Endothelial cell of umbilical vein (primary cell): ENCODE measurements at regions of chr6 and their contacts with region 1.

Region 1: DNA sequence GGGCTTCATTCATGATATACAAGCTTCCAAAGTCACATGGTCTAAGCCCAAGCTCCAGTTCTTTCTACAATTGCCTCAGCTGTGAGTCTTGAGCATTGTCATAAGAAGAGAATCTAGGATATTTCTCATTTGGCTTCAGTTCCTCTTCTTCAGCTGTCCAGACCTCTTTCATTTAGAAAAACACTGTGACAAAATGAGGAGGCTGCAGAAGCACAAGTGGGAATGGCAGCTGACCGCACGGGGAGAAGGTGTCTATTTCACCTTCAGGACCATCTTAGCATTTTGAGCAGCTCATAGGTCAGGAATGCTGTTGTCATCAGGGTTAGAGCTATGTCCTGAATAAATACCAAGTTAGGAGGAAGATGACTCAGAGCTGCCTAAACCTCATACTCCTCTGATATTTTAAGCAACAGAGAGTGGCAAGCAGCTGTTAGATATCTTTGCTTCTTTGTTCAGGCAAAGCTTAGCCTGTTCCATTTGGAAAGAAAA is 390.1 kb upstream of the CITED2 start:
- DNase-seq: peak; percentile 91
- H3K4me3 ChIP-seq: no peak overlapping the region
- H3K27ac ChIP-seq: peak overlapping the region; percentile 96
- H3K4me1 ChIP-seq: peaks cover 42% of the 10 kb centered on the region
- H3K27me3 ChIP-seq: no peaks in the 10 kb centered on the region
- CTCF ChIP-seq: no peak
- POLR2A ChIP-seq: peak; percentile 63

Region 2: GRCh38 chr6:139369568-139370282 is 394.8 kb before region 1 on chr6:
- CTCF ChIA-PET with region 1: interaction called, 20 read pairs
- POLR2A ChIA-PET with region 1: interaction called, 29 read pairs
- dilution Hi-C with region 1: no loop called
- intact Hi-C with region 1: loop called (anchors 1 kb)
- DNase-seq: peak; percentile 68
- H3K4me3 ChIP-seq: no peak overlapping the region
- H3K27ac ChIP-seq: no peak overlapping the region
- H3K4me1 ChIP-seq: peaks cover 41% of the 10 kb centered on the region
- H3K27me3 ChIP-seq: no peaks in the 10 kb centered on the region
- CTCF ChIP-seq: peak; percentile 43 to 46
- POLR2A ChIP-seq: no peak

Region 3: GRCh38 chr6:139568956-139569548 is 195.5 kb before region 1 on chr6:
- CTCF ChIA-PET with region 1: interaction called, 3 read pairs
- POLR2A ChIA-PET with region 1: no interaction called
- dilution Hi-C with region 1: no loop called
- intact Hi-C with region 1: loop called (anchors 1 kb)
- DNase-seq: peak; percentile 80
- H3K4me3 ChIP-seq: peak overlapping the region in 1 of 3 experiments; percentile 22
- H3K27ac ChIP-seq: peak overlapping the region; percentile 81
- H3K4me1 ChIP-seq: peaks cover 24% of the 10 kb centered on the region
- H3K27me3 ChIP-seq: no peaks in the 10 kb centered on the region
- CTCF ChIP-seq: no peak
- POLR2A ChIP-seq: no peak

Region 4: GRCh38 chr6:139644821-139645220 is 119.7 kb before region 1 on chr6:
- CTCF ChIA-PET with region 1: no interaction called
- POLR2A ChIA-PET with region 1: no interaction called
- dilution Hi-C with region 1: no loop called
- intact Hi-C with region 1: no loop called
- DNase-seq: no peak
- H3K4me3 ChIP-seq: no peak overlapping the region
- H3K27ac ChIP-seq: no peak overlapping the region
- H3K4me1 ChIP-seq: no peaks in the 10 kb centered on the region
- H3K27me3 ChIP-seq: no peaks in the 10 kb centered on the region
- CTCF ChIP-seq: no peak
- POLR2A ChIP-seq: no peak

Region 5: GRCh38 chr6:139743664-139744437 is 20.7 kb before region 1 on chr6:
- CTCF ChIA-PET with region 1: interaction called, 3 read pairs
- POLR2A ChIA-PET with region 1: interaction called, 3 read pairs
- dilution Hi-C with region 1: no loop called
- intact Hi-C with region 1: loop called (anchors 1 kb)
- DNase-seq: peak; percentile 94
- H3K4me3 ChIP-seq: no peak overlapping the region
- H3K27ac ChIP-seq: peak overlapping the region; percentile 73
- H3K4me1 ChIP-seq: peaks cover 24% of the 10 kb centered on the region
- H3K27me3 ChIP-seq: no peaks in the 10 kb centered on the region
- CTCF ChIP-seq: no peak
- POLR2A ChIP-seq: peak; percentile 21

Region 6: GRCh38 chr6:139788303-139788702 is 23.8 kb after region 1 on chr6:
- CTCF ChIA-PET with region 1: no interaction called
- POLR2A ChIA-PET with region 1: no interaction called
- dilution Hi-C with region 1: no loop called
- intact Hi-C with region 1: no loop called
- DNase-seq: no peak
- H3K4me3 ChIP-seq: no peak overlapping the region
- H3K27ac ChIP-seq: no peak overlapping the region
- H3K4me1 ChIP-seq: no peaks in the 10 kb centered on the region
- H3K27me3 ChIP-seq: no peaks in the 10 kb centered on the region
- CTCF ChIP-seq: no peak
- POLR2A ChIP-seq: no peak

Region 7: GRCh38 chr6:139881728-139882211 is 117.2 kb after region 1 on chr6:
- CTCF ChIA-PET with region 1: no interaction called
- POLR2A ChIA-PET with region 1: no interaction called
- dilution Hi-C with region 1: no loop called
- intact Hi-C with region 1: loop called (anchors 5 kb)
- DNase-seq: peak; percentile 69
- H3K4me3 ChIP-seq: no peak overlapping the region
- H3K27ac ChIP-seq: no peak overlapping the region
- H3K4me1 ChIP-seq: peaks cover 14% of the 10 kb centered on the region
- H3K27me3 ChIP-seq: no peaks in the 10 kb centered on the region
- CTCF ChIP-seq: peak; percentile 42 to 49
- POLR2A ChIP-seq: no peak

Region 8: GRCh38 chr6:140138311-140139010 is 373.9 kb after region 1 on chr6:
- CTCF ChIA-PET with region 1: no interaction called
- POLR2A ChIA-PET with region 1: no interaction called
- dilution Hi-C with region 1: no loop called
- intact Hi-C with region 1: loop called (anchors 1 kb)
- DNase-seq: peak; percentile 70
- H3K4me3 ChIP-seq: no peak overlapping the region
- H3K27ac ChIP-seq: peak overlapping the region; percentile 98
- H3K4me1 ChIP-seq: peaks cover 10% of the 10 kb centered on the region
- H3K27me3 ChIP-seq: no peaks in the 10 kb centered on the region
- CTCF ChIP-seq: no peak
- POLR2A ChIP-seq: no peak

Region 9: GRCh38 chr6:140572129-140572528 is 807.6 kb after region 1 on chr6:
- CTCF ChIA-PET with region 1: no interaction called
- POLR2A ChIA-PET with region 1: no interaction called
- dilution Hi-C with region 1: no loop called
- intact Hi-C with region 1: loop called (anchors 2 kb)
- DNase-seq: peak; percentile 96
- H3K4me3 ChIP-seq: no peak overlapping the region
- H3K27ac ChIP-seq: peak overlapping the region; percentile 84
- H3K4me1 ChIP-seq: peaks cover 24% of the 10 kb centered on the region
- H3K27me3 ChIP-seq: no peaks in the 10 kb centered on the region
- CTCF ChIP-seq: no peak
- POLR2A ChIP-seq: peak; percentile 44